CD14-positive monocyte (primary cell): ENCODE measurements at regions of chr19 and their contacts with region 1.

Region 1: DNA sequence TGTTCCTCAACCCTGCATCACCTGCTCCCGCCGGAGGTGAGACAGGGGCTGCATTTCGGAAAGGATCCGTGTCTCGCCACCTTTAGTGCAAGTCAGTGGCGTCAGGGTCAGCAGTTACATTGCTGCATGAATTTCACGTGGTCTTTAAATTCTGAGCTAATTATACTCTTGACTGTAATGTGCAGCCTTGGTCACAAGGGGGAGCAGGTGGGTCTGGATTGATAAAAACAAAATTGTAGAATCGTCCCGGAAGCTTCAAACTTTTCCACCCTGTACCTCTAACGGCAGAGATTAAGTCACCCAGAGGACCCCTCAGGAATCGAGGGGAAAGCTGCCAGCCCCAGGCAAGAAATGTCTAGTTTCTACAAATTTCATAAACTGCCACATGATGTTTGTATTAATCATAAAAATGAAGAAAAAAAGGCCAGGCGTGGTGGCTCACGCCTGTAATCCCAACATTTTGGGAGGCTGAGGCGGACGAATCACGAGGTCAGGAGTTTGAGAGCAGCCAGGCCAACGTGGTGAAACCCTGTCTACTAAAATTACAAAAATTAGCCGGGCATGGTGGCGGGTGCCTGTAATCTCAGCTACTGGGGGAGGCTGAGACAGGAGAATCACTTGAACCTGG is 20.2 kb downstream of the BBC3 start:
- DNase-seq: peak; percentile 69 to 85 (median 75)
- H3K4me3 ChIP-seq: peak overlapping the region in 1 of 3 experiments; percentile 31
- H3K4me3 Mint-ChIP-seq: peak overlapping the region in 1 of 2 donors; percentile 30
- H3K27ac ChIP-seq: peak overlapping the region in 1 of 2 donors; percentile 59
- H3K27ac Mint-ChIP-seq: peak overlapping the region; percentile 35 to 87 (median 84)
- H3K4me1 ChIP-seq: peaks cover 8 to 10% of the 10 kb centered on the region in 2 donors
- H3K4me1 Mint-ChIP-seq: peaks cover 12% of the 10 kb centered on the region
- H3K27me3 ChIP-seq: no peaks in the 10 kb centered on the region
- H3K27me3 Mint-ChIP-seq: peaks cover 0 to 3% (median 0%) of the 10 kb centered on the region in 3 donors
- CTCF ChIP-seq: peak; percentile 81

Region 2: DNA sequence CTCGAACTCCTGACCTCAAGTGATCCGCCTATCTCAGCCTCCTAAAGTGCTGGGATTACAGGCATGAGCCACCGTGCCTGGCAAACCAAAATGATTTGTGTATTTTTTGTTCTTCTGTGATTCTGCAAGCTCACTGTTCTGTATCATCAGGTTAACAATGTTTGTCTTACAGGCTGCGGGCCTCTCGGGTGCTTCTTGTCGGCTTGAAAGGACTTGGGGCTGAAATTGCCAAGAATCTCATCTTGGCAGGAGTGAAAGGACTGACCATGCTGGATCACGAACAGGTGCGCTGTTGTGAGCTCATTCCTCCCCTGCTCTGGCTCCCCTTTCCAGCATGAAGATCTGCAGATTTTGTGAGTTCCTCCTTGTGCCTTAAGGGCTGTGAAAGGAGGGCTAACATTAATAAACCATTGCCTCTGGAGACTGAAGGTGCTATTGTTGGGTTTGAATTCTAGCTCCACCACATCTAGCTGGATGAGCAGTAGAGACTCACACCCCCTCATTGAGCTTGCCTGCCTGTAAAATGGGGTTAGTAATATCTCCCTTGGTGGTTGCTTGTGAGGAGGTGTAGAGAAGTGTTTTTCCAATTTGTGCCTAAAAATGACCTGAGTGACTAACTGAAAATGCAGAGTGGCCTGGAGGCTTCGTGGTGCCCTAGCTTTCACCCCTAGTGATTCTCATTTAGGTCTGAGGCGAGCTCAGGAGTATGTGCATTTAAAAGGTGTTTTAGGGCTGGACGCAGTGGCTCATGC is 67.3 kb before region 1 on chr19:
- intact Hi-C with region 1: loop called in 1 of 2 experiments (anchors 10 kb)
- DNase-seq: no peak
- H3K4me3 ChIP-seq: no peak overlapping the region
- H3K4me3 Mint-ChIP-seq: no peak overlapping the region
- H3K27ac ChIP-seq: no peak overlapping the region
- H3K27ac Mint-ChIP-seq: peak overlapping the region in 2 of 7 donors; percentile 12 to 27
- H3K4me1 ChIP-seq: no peaks in the 10 kb centered on the region
- H3K4me1 Mint-ChIP-seq: peaks cover 6% of the 10 kb centered on the region
- H3K27me3 ChIP-seq: no peaks in the 10 kb centered on the region
- H3K27me3 Mint-ChIP-seq: peaks cover 0 to 1% (median 1%) of the 10 kb centered on the region in 3 donors
- CTCF ChIP-seq: no peak

Region 3: GRCh38 chr19:47152224-47153017 is 58.4 kb before region 1 on chr19:
- intact Hi-C with region 1: loop called (anchors 5 to 10 kb)
- DNase-seq: no peak
- H3K4me3 ChIP-seq: no peak overlapping the region
- H3K4me3 Mint-ChIP-seq: no peak overlapping the region
- H3K27ac ChIP-seq: no peak overlapping the region
- H3K27ac Mint-ChIP-seq: peak overlapping the region in 1 of 7 donors; percentile 73
- H3K4me1 ChIP-seq: peaks cover 17 to 18% of the 10 kb centered on the region in 2 donors
- H3K4me1 Mint-ChIP-seq: peaks cover 18% of the 10 kb centered on the region
- H3K27me3 ChIP-seq: no peaks in the 10 kb centered on the region
- H3K27me3 Mint-ChIP-seq: peaks cover 0 to 2% (median 1%) of the 10 kb centered on the region in 3 donors
- CTCF ChIP-seq: no peak

Region 4: GRCh38 chr19:47231215-47231984 is 20.6 kb after region 1 on chr19:
- intact Hi-C with region 1: loop called in 1 of 2 experiments (anchors 2 kb)
- DNase-seq: peak; percentile 76 to 91 (median 87)
- H3K4me3 ChIP-seq: peak overlapping the region; percentile 47 to 99 (median 50)
- H3K4me3 Mint-ChIP-seq: peak overlapping the region; percentile 81 to 92
- H3K27ac ChIP-seq: peak overlapping the region; percentile 20 to 78
- H3K27ac Mint-ChIP-seq: peak overlapping the region; percentile 50 to 92 (median 85)
- H3K4me1 ChIP-seq: peaks cover 47 to 53% of the 10 kb centered on the region in 2 donors
- H3K4me1 Mint-ChIP-seq: peaks cover 24% of the 10 kb centered on the region
- H3K27me3 ChIP-seq: peaks cover 0 to 20% of the 10 kb centered on the region in 2 donors
- H3K27me3 Mint-ChIP-seq: peaks cover 29 to 46% (median 36%) of the 10 kb centered on the region in 3 donors
- CTCF ChIP-seq: no peak

Region 5: DNA sequence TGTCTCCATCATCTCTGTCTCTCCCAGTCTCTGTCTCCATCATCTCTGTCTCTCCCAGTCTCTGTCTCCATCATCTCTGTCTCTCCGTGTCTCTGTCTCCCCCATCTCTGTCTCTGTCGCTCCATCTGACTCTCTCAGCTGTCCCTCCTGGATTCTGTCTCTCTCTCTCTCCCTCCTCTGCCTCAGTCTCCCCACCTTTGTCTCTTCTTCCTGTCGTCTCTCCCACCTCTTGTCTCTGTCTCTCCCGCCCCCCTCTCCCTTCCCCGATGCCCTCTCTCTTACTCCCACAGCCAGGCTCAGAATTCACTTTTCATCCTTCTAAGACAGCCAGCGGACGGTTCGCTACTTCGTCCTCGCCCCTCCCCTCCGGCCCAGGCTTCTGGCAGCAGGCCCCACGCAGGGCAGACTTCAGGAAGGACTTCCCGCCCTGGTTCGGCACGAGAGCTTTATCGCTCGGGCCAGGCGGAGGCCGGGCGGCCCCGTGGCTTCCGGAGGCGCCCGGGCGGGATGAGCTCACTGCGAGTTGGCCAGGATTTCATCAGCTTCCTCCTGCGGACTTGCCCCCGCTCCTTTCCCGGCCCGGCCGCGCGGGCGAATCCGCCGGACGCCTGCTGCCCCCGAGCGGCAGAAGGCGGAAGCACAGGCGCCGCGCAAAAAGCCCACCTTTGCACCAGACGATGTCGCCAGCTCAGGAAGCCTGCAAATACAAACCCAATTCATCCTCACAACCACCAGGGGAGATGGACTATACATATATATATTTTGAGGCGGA is 33.2 kb after region 1 on chr19:
- intact Hi-C with region 1: loop called (anchors 1 to 5 kb)
- DNase-seq: peak; percentile 95 to 98 (median 98)
- H3K4me3 ChIP-seq: peak overlapping the region in 1 of 3 experiments; percentile 43
- H3K4me3 Mint-ChIP-seq: peak overlapping the region; percentile 71 to 92
- H3K27ac ChIP-seq: peak overlapping the region; percentile 59 to 60
- H3K27ac Mint-ChIP-seq: peak overlapping the region in 5 of 7 donors; percentile 79 to 94 (median 91)
- H3K4me1 ChIP-seq: peaks cover 36 to 46% of the 10 kb centered on the region in 2 donors
- H3K4me1 Mint-ChIP-seq: peaks cover 30% of the 10 kb centered on the region
- H3K27me3 ChIP-seq: peaks cover 27 to 42% of the 10 kb centered on the region in 2 donors
- H3K27me3 Mint-ChIP-seq: peaks cover 12 to 29% (median 28%) of the 10 kb centered on the region in 3 donors
- CTCF ChIP-seq: peak; percentile 98

Region 6: GRCh38 chr19:47336853-47337279 is 126.1 kb after region 1 on chr19:
- intact Hi-C with region 1: no loop called
- DNase-seq: peak; percentile 86 to 90 (median 87)
- H3K4me3 ChIP-seq: peak overlapping the region; percentile 47 to 74 (median 57)
- H3K4me3 Mint-ChIP-seq: peak overlapping the region; percentile 84 to 90
- H3K27ac ChIP-seq: peak overlapping the region; percentile 76 to 89
- H3K27ac Mint-ChIP-seq: peak overlapping the region; percentile 92 to 100 (median 97)
- H3K4me1 ChIP-seq: peaks cover 53% of the 10 kb centered on the region in 2 donors
- H3K4me1 Mint-ChIP-seq: peaks cover 61% of the 10 kb centered on the region
- H3K27me3 ChIP-seq: no peaks in the 10 kb centered on the region
- H3K27me3 Mint-ChIP-seq: peaks cover 5 to 7% (median 6%) of the 10 kb centered on the region in 3 donors
- CTCF ChIP-seq: no peak

Region 7: GRCh38 chr19:47414469-47414868 is 203.7 kb after region 1 on chr19:
- intact Hi-C with region 1: no loop called
- DNase-seq: peak in 1 of 3 donors; percentile 19
- H3K4me3 ChIP-seq: no peak overlapping the region
- H3K4me3 Mint-ChIP-seq: peak overlapping the region in 1 of 2 donors; percentile 13
- H3K27ac ChIP-seq: no peak overlapping the region
- H3K27ac Mint-ChIP-seq: no peak overlapping the region
- H3K4me1 ChIP-seq: peaks cover 0 to 9% of the 10 kb centered on the region in 2 donors
- H3K4me1 Mint-ChIP-seq: peaks cover 9% of the 10 kb centered on the region
- H3K27me3 ChIP-seq: peaks cover 23 to 37% of the 10 kb centered on the region in 2 donors
- H3K27me3 Mint-ChIP-seq: peaks cover 56 to 73% (median 57%) of the 10 kb centered on the region in 3 donors
- CTCF ChIP-seq: peak; percentile 17

Region 8: GRCh38 chr19:47483800-47484690 is 273.2 kb after region 1 on chr19 and contains the start of gene KPTN:
- intact Hi-C with region 1: no loop called
- DNase-seq: peak; percentile 89 to 93 (median 92)
- H3K4me3 ChIP-seq: peak within 1 kb of the TSS; percentile 59 to 89 (median 88)
- H3K4me3 Mint-ChIP-seq: peak within 1 kb of the TSS; percentile 86 to 95
- H3K27ac ChIP-seq: peak within 1 kb of the TSS; percentile 31 to 96
- H3K27ac Mint-ChIP-seq: peak within 1 kb of the TSS; percentile 95 to 100 (median 99)
- H3K4me1 ChIP-seq: peaks cover 14 to 20% of the 10 kb centered on the region in 2 donors
- H3K4me1 Mint-ChIP-seq: peaks cover 35% of the 10 kb centered on the region
- H3K27me3 ChIP-seq: no peaks in the 10 kb centered on the region
- H3K27me3 Mint-ChIP-seq: peaks cover 6 to 8% (median 6%) of the 10 kb centered on the region in 3 donors
- CTCF ChIP-seq: peak; percentile 93
- polyA plus RNA-seq, gene KPTN: 9.5 to 9.7 (median 9.5) TPM